ENCODE measurements at regions of chr6 and their contacts with region 1.

Region 1: DNA sequence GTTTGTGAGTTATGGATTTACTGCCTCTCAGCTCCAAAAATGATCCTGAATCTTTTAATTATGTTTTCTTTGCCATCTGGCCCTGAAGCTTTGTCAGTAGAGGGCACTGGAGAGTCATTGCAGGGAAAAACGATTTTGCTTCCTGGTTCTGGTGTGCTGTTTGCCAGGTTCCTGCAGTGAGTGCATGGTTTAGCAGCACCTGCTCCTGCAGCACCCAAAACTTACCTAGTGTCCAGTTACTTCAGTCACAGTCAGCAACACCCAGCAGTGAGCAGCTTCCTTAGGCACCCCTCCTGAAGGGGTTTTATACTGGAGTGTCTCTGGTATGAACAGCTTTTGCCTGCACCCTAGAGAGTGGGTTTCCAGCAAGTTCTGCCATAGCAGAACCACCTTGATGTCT is 6.0 kb upstream of the TRIM26 start:
- H3K4me3 ChIP-seq: no peak overlapping the region
- H3K27ac ChIP-seq: no peak overlapping the region
- H3K4me1 ChIP-seq: peaks cover 2% of the 10 kb centered on the region; the same call in 1 of the 2 replicates
- CTCF ChIP-seq: peak; percentile 69

Region 2: DNA sequence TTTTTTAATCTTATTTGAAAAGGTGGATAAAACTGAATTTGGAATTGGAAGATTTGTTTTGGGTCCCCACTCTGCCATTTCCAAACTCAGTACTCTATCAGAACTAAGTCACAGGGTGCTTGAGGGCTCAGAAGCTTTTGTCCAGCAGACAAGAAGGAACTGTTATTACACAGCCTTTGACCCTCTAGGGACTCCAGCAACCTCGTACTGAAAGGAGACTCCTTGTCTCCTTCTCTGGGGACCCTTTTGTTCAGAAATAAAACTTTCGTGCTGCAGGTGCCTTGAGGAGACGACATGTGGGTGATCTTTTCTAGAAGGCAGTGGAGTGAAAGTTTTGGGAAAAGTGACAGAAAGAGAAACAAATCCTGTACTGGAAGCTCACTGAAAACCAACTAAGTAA is 165.6 kb before region 1 on chr6:
- CTCF ChIA-PET with region 1: no interaction called
- POLR2A ChIA-PET with region 1: no interaction called
- H3K4me3 ChIP-seq: no peak overlapping the region
- H3K27ac ChIP-seq: no peak overlapping the region
- H3K4me1 ChIP-seq: no peaks in the 10 kb centered on the region
- CTCF ChIP-seq: no peak

Region 3: DNA sequence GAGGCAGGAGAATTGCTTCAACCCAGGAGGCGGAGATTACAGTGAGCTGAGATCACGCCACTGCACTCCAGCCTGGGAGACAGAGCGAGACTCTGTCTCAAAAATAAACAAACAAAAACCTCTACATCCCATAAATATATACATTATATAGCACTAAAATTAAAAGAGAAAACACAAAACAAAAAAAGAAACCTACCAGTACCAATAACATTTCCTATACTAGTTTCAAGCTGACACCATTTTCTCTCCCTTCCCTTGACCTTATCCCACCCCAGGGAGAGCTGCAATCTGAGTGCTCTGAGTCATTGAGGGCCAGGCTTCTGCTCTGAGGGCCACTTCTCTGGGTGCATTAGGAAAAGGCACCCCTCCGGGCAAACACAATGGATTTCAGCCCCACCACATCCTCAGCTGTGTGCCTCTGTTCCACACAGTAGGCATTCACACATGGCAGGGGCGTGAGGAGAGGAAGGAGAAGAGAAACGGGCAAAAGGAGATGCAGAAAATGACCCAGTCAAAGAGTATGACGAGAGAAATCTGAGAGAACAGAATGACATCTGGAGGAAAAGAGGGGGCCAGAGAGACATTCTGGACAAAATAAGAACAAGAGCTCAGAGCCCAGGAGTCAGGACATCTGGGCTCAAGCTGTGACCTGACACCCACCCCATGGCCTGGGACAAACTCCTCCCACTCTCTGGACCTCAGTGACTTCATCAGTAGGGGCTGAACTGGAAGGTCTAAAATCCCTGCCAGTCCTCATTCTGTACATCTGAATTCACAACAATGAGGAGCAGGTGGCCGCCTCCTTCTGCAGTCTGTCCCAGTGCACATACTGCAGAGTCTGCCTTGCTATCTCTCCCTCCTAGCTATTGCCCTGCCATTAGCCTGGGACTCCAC is 24.2 kb before region 1 on chr6:
- CTCF ChIA-PET with region 1: interaction called, 14 read pairs
- POLR2A ChIA-PET with region 1: no interaction called
- H3K4me3 ChIP-seq: no peak overlapping the region
- H3K27ac ChIP-seq: no peak overlapping the region
- H3K4me1 ChIP-seq: 0 out of 2 replicates have a peak, but pooled peaks cover 3% of the 10 kb centered on the region
- CTCF ChIP-seq: no peak

Region 4: DNA sequence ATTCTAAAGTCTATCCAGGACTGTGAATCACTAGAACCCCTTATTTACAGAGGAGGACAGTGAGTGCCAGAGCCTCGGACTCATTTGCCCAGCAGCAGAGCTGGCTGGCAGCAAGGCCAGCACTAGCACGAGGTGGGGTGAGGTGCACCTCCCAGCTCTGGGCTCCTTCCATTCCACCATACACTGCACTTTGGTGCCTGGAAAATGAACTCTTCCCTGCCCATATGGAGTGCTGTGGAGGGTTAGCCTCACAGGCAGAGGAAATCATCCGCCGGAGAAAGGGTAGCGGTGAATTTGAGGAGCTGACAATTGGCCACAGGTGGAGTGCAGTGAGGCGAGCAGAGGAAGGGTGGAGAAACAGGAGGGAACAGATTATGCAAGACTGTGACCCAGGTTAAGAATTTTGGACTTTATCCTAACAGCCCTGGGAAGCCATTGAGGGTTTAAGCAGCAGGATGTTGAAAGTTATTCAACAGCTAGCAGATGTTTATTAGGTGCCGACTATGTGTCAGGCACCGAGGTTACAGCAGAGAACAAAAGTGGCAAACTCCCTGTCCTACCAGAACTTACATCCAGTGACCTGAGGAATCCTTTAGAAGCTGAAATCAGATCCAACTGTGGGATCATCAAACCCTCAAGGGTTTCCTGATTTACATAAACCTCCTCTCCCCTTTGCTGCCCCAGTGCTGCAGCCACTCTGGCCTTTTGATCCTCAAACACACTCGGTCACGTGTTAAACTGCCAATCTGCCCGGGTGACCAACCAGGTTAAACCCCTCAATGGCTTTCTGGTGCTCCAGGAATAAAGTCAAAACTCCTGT is 12.2 kb before region 1 on chr6:
- CTCF ChIA-PET with region 1: interaction called, 14 read pairs
- POLR2A ChIA-PET with region 1: no interaction called
- H3K4me3 ChIP-seq: no peak overlapping the region
- H3K27ac ChIP-seq: no peak overlapping the region
- H3K4me1 ChIP-seq: peaks cover 43% of the 10 kb centered on the region
- CTCF ChIP-seq: no peak

Region 5: DNA sequence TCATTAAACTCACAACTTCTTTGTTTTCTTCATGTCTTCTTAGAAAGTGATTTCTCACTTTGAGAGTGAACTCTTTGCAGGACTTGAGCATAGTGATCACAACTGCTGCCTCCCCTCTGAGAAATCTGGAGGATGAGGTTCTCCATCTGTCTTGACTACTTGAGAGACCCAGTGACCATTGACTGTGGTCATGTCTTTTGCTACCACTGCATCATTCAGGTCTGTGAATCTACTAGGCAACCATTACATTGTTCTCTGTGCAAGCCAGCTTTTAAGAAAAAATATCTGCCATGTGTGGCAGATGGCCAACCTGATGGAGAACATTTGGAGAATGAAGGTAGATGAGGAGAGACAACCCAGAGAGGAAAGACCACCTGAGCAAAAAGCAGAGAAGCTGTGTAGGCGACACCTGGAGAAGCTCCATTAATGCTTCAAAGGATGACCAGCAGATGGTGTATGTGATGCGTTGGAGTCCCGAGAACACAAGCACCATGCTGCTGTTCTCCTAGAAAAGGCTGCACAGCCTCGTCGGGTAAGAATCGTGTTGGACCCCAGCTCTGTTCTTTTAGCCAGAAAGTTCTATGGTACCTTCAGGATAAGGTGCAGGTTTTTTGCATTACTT is 19.0 kb after region 1 on chr6:
- CTCF ChIA-PET with region 1: interaction called, 11 read pairs
- POLR2A ChIA-PET with region 1: no interaction called
- H3K4me3 ChIP-seq: no peak overlapping the region
- H3K27ac ChIP-seq: no peak overlapping the region
- H3K4me1 ChIP-seq: no peaks in the 10 kb centered on the region
- CTCF ChIP-seq: peak; percentile 56

Region 6: GRCh38 chr6:30352550-30352949 is 133.3 kb after region 1 on chr6:
- CTCF ChIA-PET with region 1: interaction called, 16 read pairs
- POLR2A ChIA-PET with region 1: no interaction called
- H3K4me3 ChIP-seq: no peak overlapping the region
- H3K27ac ChIP-seq: no peak overlapping the region
- H3K4me1 ChIP-seq: no peaks in the 10 kb centered on the region
- CTCF ChIP-seq: no peak

Region 7: GRCh38 chr6:30396833-30397479 is 177.7 kb after region 1 on chr6:
- CTCF ChIA-PET with region 1: interaction called, 13 read pairs
- POLR2A ChIA-PET with region 1: no interaction called
- H3K4me3 ChIP-seq: no peak overlapping the region
- H3K27ac ChIP-seq: no peak overlapping the region
- H3K4me1 ChIP-seq: no peaks in the 10 kb centered on the region
- CTCF ChIP-seq: peak; percentile 89

Measured in HEK293 (cell line).